Panc1 (cell line): ENCODE measurements at regions of chr2 and their contacts with region 1.

Region 1: DNA sequence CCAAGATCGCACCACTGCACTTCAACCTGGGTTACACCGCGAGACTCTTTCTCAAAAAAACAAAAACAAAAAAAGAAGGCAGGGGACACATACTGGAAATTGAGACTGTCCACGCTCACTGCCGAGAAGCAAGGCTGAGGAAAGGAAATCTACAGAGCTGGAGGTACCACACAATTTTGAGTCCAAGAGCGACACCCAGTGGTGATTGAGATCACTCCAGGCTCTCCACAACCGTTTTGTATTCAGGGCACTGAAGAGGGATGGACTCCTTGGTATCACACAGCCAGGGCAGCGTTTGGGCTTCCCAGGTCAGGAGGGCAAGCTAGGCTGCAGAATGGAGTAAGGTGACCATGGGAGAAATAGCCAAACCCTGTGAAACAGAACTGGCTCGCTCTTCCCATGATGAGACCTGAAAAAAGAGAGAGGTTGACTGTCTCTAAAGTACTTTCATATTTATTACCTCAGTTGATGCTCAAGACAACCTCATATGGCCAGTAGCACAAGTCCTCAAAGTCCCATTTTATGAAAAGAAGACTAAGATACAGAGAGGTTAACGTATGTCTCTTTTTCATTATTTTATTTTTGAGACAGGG is 74.5 kb upstream of the YPEL5 start:
- DNase-seq: peak; percentile 69
- ATAC-seq: peak; percentile 99
- H3K4me3 ChIP-seq: no peak overlapping the region
- H3K27ac ChIP-seq: no peak overlapping the region
- H3K4me1 ChIP-seq: no peaks in the 10 kb centered on the region
- H3K27me3 ChIP-seq: peaks cover 5% of the 10 kb centered on the region
- CTCF ChIP-seq: peak; percentile 80

Region 2: GRCh38 chr2:28958689-28959088 is 1113.7 kb before region 1 on chr2:
- CTCF ChIA-PET with region 1: no interaction called
- POLR2A ChIA-PET with region 1: no interaction called
- in situ Hi-C with region 1: no loop called
- intact Hi-C with region 1: loop called (anchors 5 kb)
- DNase-seq: peak; percentile 59
- ATAC-seq: peak; percentile 82
- H3K4me3 ChIP-seq: no peak overlapping the region
- H3K27ac ChIP-seq: no peak overlapping the region
- H3K4me1 ChIP-seq: peaks cover 12% of the 10 kb centered on the region
- H3K27me3 ChIP-seq: no peaks in the 10 kb centered on the region
- CTCF ChIP-seq: peak; percentile 81

Region 3: DNA sequence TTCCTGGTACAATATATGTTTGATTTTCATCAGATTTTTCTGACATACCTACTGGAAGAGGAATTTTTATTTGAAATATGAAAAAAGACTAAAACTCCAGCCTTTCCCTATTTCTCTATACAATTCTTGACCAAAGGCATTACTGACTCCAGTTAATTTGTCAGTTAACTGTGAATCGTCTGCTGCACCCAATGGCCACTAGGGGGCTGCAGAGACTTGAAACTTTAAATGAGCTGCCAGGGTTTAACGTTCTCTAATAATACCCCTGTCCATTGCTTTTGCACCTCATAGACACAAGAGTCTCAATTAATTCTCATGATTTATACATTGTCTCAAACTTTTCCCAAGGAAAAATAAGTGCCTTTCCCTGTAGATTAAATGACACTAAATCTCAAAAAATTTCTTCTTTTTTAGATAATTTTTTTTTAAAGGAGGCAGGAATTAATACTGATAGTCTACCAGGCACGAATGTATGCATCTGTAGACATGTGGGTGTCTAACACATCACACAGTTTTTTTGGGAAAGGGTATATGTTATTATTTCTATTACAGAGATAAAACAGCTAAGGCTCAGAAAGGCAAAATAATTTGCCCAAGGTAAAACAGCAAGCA is 149.1 kb before region 1 on chr2:
- CTCF ChIA-PET with region 1: no interaction called
- POLR2A ChIA-PET with region 1: no interaction called
- in situ Hi-C with region 1: no loop called
- intact Hi-C with region 1: loop called (anchors 1 kb)
- DNase-seq: peak; percentile 38
- ATAC-seq: peak; percentile 71
- H3K4me3 ChIP-seq: no peak overlapping the region
- H3K27ac ChIP-seq: no peak overlapping the region
- H3K4me1 ChIP-seq: no peaks in the 10 kb centered on the region
- H3K27me3 ChIP-seq: peaks cover 31% of the 10 kb centered on the region
- CTCF ChIP-seq: peak; percentile 89